Endothelial cell of umbilical vein (primary cell): ENCODE measurements at regions of chr4 and their contacts with region 1.

Region 1: GRCh38 chr4:38663801-38664705 is at the start of gene KLF3:
- DNase-seq: peak; percentile 86
- H3K4me3 ChIP-seq: peak within 1 kb of the TSS; percentile 81 to 89 (median 88)
- H3K27ac ChIP-seq: peak within 1 kb of the TSS; percentile 99
- H3K4me1 ChIP-seq: peaks cover 28% of the 10 kb centered on the region
- H3K27me3 ChIP-seq: no peaks in the 10 kb centered on the region
- CTCF ChIP-seq: no peak
- POLR2A ChIP-seq: peak; percentile 56
- total RNA-seq, gene KLF3: 50.5 and 51.8 TPM in 2 replicates

Region 2: DNA sequence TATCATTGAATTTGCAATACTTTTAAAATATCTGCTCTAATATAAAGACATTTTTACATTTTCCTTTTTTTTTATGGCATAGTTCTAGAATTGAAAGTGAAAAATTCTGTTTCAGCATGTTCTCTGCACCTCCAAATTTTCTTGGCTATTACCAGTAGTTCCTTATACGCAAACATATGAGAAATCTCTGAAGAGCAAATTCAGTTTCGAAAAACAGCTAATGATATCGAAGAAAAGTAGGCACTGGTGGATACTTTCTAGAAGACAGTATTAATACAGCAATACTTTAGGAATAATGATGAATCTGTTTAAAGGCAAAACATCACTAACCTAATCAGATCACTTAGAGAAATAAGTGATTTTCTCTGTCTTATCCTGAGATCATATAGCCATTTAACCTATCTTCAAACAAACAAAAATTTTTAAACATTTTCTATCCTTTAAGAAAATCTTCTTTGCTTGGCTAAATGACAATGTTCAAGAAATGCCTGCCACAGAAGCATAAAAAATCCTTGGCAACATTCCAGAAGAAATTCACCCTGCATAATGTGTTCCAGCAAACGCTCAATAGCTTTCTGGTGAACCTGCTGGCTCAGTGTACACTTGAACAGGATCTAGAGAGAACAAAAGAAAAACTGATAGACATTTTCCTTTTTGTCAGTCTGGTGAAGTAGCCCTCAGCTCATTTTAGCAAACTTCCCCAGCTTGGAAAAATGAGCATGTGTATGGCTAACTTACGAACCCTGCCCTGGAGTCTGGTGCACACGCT is 51.2 kb before region 1 on chr4:
- CTCF ChIA-PET with region 1: no interaction called
- POLR2A ChIA-PET with region 1: no interaction called
- dilution Hi-C with region 1: no loop called
- intact Hi-C with region 1: no loop called
- DNase-seq: peak; percentile 56
- H3K4me3 ChIP-seq: no peak overlapping the region
- H3K27ac ChIP-seq: no peak overlapping the region
- H3K4me1 ChIP-seq: no peaks in the 10 kb centered on the region
- H3K27me3 ChIP-seq: peaks cover 0 to 3% of the 10 kb centered on the region in 2 experiments
- CTCF ChIP-seq: no peak
- POLR2A ChIP-seq: no peak

Region 3: GRCh38 chr4:38867478-38868058 is 203.5 kb after region 1 on chr4 and contains the start of gene FAM114A1:
- CTCF ChIA-PET with region 1: no interaction called
- POLR2A ChIA-PET with region 1: no interaction called
- dilution Hi-C with region 1: no loop called
- intact Hi-C with region 1: loop called (anchors 5 kb)
- DNase-seq: peak; percentile 80
- H3K4me3 ChIP-seq: peak within 1 kb of the TSS; percentile 19 to 90 (median 57)
- H3K27ac ChIP-seq: peak within 1 kb of the TSS; percentile 89
- H3K4me1 ChIP-seq: peaks cover 23% of the 10 kb centered on the region
- H3K27me3 ChIP-seq: peaks cover 0 to 2% of the 10 kb centered on the region in 2 experiments
- CTCF ChIP-seq: no peak
- POLR2A ChIP-seq: peak; percentile 32
- total RNA-seq, gene FAM114A1: 99.2 and 101 TPM in 2 replicates

Region 4: DNA sequence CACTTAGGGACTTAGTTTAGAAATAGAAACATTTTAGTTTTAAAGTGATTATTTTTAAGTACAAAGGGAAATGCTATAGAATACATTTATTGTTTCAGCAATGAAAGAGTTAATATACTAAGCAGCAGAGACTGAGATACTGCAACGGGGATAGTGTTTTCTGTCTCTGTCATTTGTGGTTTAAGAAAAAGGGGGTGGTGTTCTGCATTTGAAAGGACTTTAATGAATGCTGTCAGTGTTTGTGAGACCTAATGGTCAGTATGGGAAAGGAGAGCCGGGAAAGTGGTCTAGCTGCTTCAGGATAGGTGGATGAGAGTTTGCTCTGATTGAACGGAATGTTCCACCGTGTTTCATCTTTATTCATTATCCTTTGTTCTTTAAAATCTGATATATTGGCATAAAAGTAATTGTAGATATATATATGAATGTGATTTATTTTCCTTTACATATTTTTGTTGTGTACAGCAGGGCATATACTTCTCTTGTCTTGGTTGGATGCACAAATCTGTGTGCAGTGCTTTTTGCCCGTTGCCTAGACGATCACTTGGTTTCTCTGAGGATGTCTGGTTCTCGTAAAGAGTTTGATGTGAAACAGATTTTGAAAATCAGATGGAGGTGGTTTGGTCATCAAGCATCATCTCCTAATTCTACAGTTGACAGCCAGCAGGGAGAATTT is 398.2 kb after region 1 on chr4 and contains the start of gene KLHL5:
- CTCF ChIA-PET with region 1: no interaction called
- POLR2A ChIA-PET with region 1: no interaction called
- dilution Hi-C with region 1: no loop called
- intact Hi-C with region 1: no loop called
- DNase-seq: no peak
- H3K4me3 ChIP-seq: no peak within 1 kb of the TSS
- H3K27ac ChIP-seq: no peak within 1 kb of the TSS
- H3K4me1 ChIP-seq: no peaks in the 10 kb centered on the region
- H3K27me3 ChIP-seq: no peaks in the 10 kb centered on the region
- CTCF ChIP-seq: no peak
- POLR2A ChIP-seq: no peak
- total RNA-seq, gene KLHL5: 54.6 and 64.2 TPM in 2 replicates